ENCODE measurements at regions of chr10 and their contacts with region 1.

Region 1: GRCh38 chr10:97731346-97732051 is 5.4 kb upstream of the ZFYVE27 start:
- DNase-seq: peak in 1 of 2 experiments; percentile 55
- H3K4me3 ChIP-seq: no peak overlapping the region
- H3K27ac ChIP-seq: no peak overlapping the region
- H3K4me1 ChIP-seq: peaks cover 6% of the 10 kb centered on the region
- H3K27me3 ChIP-seq: no peaks in the 10 kb centered on the region
- CTCF ChIP-seq: peak; percentile 78

Region 2: GRCh38 chr10:97097084-97097433 is 634.4 kb before region 1 on chr10:
- CTCF ChIA-PET with region 1: interaction called, 11 read pairs
- POLR2A ChIA-PET with region 1: no interaction called
- intact Hi-C with region 1: no loop called
- DNase-seq: no peak
- H3K4me3 ChIP-seq: no peak overlapping the region
- H3K27ac ChIP-seq: no peak overlapping the region
- H3K4me1 ChIP-seq: no peaks in the 10 kb centered on the region
- H3K27me3 ChIP-seq: peaks cover 95% of the 10 kb centered on the region
- CTCF ChIP-seq: no peak

Region 3: GRCh38 chr10:97463363-97464132 is 268.0 kb before region 1 on chr10:
- CTCF ChIA-PET with region 1: no interaction called
- POLR2A ChIA-PET with region 1: no interaction called
- intact Hi-C with region 1: loop called (anchors 1 kb)
- DNase-seq: peak; percentile 54 to 71
- H3K4me3 ChIP-seq: no peak overlapping the region
- H3K27ac ChIP-seq: 0 out of 2 replicates have a peak overlapping the region, but pooled peaks have one; percentile 19
- H3K4me1 ChIP-seq: peaks cover 7% of the 10 kb centered on the region; the same call in 1 of the 2 replicates
- H3K27me3 ChIP-seq: no peaks in the 10 kb centered on the region
- CTCF ChIP-seq: peak; percentile 87

Region 4: DNA sequence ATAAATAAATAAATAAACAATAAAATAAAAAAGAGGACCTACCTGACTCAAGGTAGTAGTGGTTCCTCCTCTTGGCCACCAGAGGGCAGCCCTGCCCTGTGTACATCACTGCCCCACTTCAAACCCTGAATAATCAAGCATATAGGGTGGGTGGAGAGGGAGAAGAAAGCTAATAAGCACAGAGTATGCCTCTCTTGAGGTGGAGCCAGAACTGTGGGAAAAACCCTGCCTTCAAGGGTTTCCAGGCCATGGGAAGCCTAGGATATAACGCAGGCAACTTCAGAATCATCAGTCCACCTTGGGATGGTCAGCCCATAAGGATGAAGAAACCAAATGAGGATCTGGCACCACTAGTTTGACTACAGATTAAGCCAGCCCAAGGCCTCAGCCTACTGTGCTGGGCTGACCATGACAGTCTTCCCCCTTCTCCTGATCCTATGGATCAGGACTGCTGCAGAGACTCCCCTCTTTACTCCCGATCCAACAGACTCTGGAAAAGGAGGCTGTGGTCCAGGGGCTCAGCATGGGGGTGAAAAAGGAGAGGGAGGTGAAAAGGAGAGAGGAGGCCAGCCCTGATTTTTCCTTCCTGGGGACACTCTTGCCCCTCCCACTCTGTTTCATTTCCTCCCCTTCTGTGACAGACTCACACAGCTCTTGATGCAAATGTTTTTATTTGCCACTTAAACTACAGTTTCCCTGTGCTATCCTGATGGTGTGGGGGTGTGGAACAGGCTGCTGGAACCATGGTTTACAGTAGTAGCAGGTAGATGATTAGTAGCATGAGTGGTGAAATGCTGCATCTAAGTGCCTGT is 54.5 kb before region 1 on chr10:
- CTCF ChIA-PET with region 1: interaction called, 8 read pairs
- POLR2A ChIA-PET with region 1: interaction called, 5 read pairs
- intact Hi-C with region 1: loop called (anchors 1 kb)
- DNase-seq: peak; percentile 34 to 53
- H3K4me3 ChIP-seq: no peak overlapping the region
- H3K27ac ChIP-seq: no peak overlapping the region
- H3K4me1 ChIP-seq: no peaks in the 10 kb centered on the region
- H3K27me3 ChIP-seq: no peaks in the 10 kb centered on the region
- CTCF ChIP-seq: peak; percentile 81

Region 5: DNA sequence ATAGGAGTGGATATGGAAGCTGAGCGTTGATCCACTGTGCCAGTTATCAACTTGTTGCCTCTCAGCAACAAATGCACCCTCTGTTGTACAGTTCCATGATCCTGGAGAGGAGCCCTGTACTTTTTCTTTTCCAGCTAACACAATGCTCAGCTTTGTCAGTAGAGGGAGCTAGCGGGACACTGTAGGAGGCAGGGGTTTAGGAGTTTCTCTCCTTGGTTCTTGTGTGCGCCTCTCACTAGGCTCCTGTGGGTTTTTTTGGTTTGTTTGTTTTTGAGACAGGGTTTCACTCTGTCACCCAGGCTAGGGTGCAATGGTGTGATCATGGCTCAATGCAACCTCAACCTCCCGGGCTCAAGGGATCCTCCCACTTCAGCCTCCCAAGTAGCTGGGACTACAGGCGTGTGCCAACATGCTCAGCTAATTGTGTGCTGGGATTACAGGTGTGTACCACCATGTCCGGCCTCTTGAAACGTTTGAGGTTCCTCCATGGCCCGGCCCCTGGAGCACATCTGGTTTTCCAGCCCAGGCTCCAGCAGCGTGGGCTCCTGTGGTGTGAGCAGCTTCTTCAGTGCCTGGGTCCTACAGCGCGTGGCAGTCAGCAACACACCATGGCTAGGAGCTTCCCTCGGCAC is 29.9 kb before region 1 on chr10:
- CTCF ChIA-PET with region 1: interaction called, 3 read pairs
- POLR2A ChIA-PET with region 1: no interaction called
- intact Hi-C with region 1: loop called (anchors 1 kb)
- DNase-seq: peak in 1 of 2 experiments; percentile 29
- H3K4me3 ChIP-seq: no peak overlapping the region
- H3K27ac ChIP-seq: no peak overlapping the region
- H3K4me1 ChIP-seq: no peaks in the 10 kb centered on the region
- H3K27me3 ChIP-seq: no peaks in the 10 kb centered on the region
- CTCF ChIP-seq: peak; percentile 74

Region 6: DNA sequence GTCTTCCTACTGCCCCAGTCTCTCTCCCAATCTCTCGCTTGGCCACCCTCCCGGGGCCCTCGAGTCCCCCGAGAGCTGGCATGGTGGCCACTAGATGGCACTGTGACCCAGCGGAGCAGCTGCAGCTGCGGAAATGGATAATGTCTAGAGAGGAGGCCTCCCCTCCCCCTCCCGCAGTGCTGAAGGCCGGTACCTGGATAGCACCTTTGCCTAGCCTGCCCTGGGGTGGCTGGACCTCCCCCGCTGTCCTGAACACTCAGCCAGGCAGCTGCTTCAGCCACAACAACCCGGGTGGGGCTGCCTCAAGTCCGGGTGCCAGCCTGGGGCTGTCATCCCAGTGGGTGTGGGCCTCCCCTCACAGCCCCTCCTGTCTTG is 183.3 kb after region 1 on chr10:
- CTCF ChIA-PET with region 1: no interaction called
- POLR2A ChIA-PET with region 1: no interaction called
- intact Hi-C with region 1: no loop called
- DNase-seq: peak; percentile 35 to 63
- H3K4me3 ChIP-seq: no peak overlapping the region
- H3K27ac ChIP-seq: no peak overlapping the region
- H3K4me1 ChIP-seq: no peaks in the 10 kb centered on the region
- H3K27me3 ChIP-seq: peaks cover 10% of the 10 kb centered on the region
- CTCF ChIP-seq: peak; percentile 85